H1 (cell line): ENCODE measurements at regions of chr1 and their contacts with region 1.

Region 1: GRCh38 chr1:243930822-243931671 is 81.0 kb upstream of the AKT3 start:
- DNase-seq: peak in 1 of 2 experiments; percentile 63
- H3K4me3 ChIP-seq: peak overlapping the region in 3 of 4 experiments; percentile 10 to 39 (median 26); a peak in 5 of 8 replicates
- H3K27ac ChIP-seq: peak overlapping the region; percentile 14; the same call in 1 of the 2 replicates
- H3K4me1 ChIP-seq: peaks cover 5 to 11% (median 7%) of the 10 kb centered on the region in 4 experiments
- H3K27me3 ChIP-seq: peaks cover 0 to 2% (median 0%) of the 10 kb centered on the region in 4 experiments; a peak in 1 of 7 replicates
- CTCF ChIP-seq: no peak
- EP300 ChIP-seq: no peak
- POLR2A ChIP-seq: no peak
- RAD21 ChIP-seq: peak in 1 of 2 experiments; percentile 8; a peak in 1 of 4 replicates

Region 2: GRCh38 chr1:243910607-243911006 is 20.4 kb before region 1 on chr1:
- CTCF ChIA-PET with region 1: no interaction called
- POLR2A ChIA-PET with region 1: no interaction called
- DNase-seq: no peak
- H3K4me3 ChIP-seq: no peak overlapping the region
- H3K27ac ChIP-seq: no peak overlapping the region
- H3K4me1 ChIP-seq: no peaks in the 10 kb centered on the region
- H3K27me3 ChIP-seq: no peaks in the 10 kb centered on the region; a peak in 1 of 7 replicates
- CTCF ChIP-seq: no peak
- EP300 ChIP-seq: no peak
- POLR2A ChIP-seq: no peak
- RAD21 ChIP-seq: no peak

Region 3: GRCh38 chr1:243946946-243947345 is 15.9 kb after region 1 on chr1:
- CTCF ChIA-PET with region 1: interaction called, 21 read pairs
- POLR2A ChIA-PET with region 1: no interaction called
- DNase-seq: peak; percentile 67 to 77
- H3K4me3 ChIP-seq: no peak overlapping the region
- H3K27ac ChIP-seq: no peak overlapping the region
- H3K4me1 ChIP-seq: peaks cover 3 to 10% (median 5%) of the 10 kb centered on the region in 4 experiments
- H3K27me3 ChIP-seq: peaks cover 0 to 20% (median 16%) of the 10 kb centered on the region in 4 experiments; a peak in 5 of 7 replicates
- CTCF ChIP-seq: peak; percentile 79 to 83 (median 81)
- EP300 ChIP-seq: no peak
- POLR2A ChIP-seq: no peak
- RAD21 ChIP-seq: peak; percentile 93